Heart left ventricle (tissue), 16 donors: ENCODE measurements at regions of chr17 and their contacts with region 1.

Region 1: GRCh38 chr17:21295036-21295952 is 10.8 kb downstream of the MAP2K3 start:
- DNase-seq: peak; percentile 71 to 89 (median 82)
- ATAC-seq: peak; percentile 79 to 92 (median 84)
- H3K4me3 ChIP-seq: no peak overlapping the region
- H3K27ac ChIP-seq: peak overlapping the region in 10 of 12 donors; percentile 31 to 80 (median 54)
- H3K4me1 ChIP-seq: peaks cover 0 to 68% (median 26%) of the 10 kb centered on the region in 12 donors
- H3K27me3 ChIP-seq: no peaks in the 10 kb centered on the region
- CTCF ChIP-seq: no peak
- POLR2A ChIP-seq: no peak

Region 2: DNA sequence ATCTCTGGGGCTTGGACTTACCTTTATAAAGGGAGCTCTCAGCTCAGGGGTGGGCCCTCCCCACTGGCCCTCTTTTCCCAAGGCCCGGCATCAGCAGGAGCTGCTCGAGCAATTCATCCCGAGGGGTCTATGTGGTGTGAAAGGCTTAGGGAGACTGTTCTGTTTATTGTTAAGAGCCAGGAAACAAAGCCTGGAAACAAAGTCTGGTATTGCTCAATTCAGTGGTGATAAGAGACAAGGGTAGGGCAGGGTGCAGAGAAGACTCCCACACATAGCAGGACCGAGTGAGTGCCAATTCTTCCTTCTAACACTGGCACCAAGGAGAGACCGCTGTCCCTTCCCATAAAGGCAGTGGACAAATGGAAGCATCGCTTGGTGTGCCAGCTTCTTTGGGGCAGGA is 1147.8 kb after region 1 on chr17:
- intact Hi-C with region 1: loop called in 1 of 10 experiments (anchors 10 kb)
- DNase-seq: no peak
- ATAC-seq: no peak
- H3K4me3 ChIP-seq: no peak overlapping the region
- H3K27ac ChIP-seq: no peak overlapping the region
- H3K4me1 ChIP-seq: no peaks in the 10 kb centered on the region
- H3K27me3 ChIP-seq: peaks cover 0 to 6% (median 0%) of the 10 kb centered on the region in 9 donors
- CTCF ChIP-seq: no peak
- POLR2A ChIP-seq: no peak